ENCODE measurements at regions of chr10 and their contacts with region 1.

Region 1: DNA sequence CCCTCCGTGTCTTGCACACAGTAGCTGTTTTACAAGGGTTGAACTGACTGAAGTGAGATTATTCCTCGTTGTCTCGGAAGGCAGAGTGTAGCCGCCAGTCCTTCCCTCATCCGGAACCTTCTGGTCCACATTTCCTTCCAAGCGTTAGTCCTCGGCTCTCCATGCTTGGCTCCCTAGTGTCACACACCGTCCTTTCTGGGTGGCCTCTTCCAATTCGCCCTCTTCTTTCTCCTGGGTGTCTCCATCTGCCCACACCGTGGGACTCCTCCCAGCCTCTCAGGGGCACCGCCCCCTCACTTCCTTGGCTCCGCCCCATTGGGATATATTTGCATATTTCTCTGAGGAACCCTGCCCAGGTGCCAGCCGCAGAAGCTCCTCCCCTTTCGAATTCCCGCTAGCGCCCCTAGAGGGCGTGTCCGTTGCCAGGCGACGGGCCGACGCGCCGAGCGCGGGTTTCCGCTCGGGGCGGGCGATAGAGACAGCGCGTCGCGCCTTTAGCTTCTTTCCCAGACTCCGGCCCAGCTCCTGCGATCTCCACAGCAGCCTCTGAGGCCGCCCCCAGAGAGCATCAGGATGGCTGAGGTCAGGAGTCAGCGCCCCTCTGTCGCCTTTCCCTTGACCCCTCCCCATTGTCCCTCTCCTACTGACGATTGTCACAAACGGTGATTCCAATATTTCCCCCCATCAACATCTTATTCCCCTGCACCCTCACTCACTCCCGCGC is at the start of gene CFAP58:
- DNase-seq: peak; percentile 95 to 98 (median 97)
- H3K4me3 ChIP-seq: peak within 1 kb of the TSS; percentile 28
- H3K27ac ChIP-seq: peak within 1 kb of the TSS in 1 of 2 donors; percentile 4
- H3K4me1 ChIP-seq: no peaks in the 10 kb centered on the region
- H3K27me3 ChIP-seq: no peaks in the 10 kb centered on the region
- CTCF ChIP-seq: peak; percentile 49 to 93 (median 82)
- EP300 ChIP-seq: no peak
- POLR2A ChIP-seq: peak; percentile 6
- total RNA-seq, gene CFAP58: 0.17 to 7.9 (median 0.60) TPM

Region 2: DNA sequence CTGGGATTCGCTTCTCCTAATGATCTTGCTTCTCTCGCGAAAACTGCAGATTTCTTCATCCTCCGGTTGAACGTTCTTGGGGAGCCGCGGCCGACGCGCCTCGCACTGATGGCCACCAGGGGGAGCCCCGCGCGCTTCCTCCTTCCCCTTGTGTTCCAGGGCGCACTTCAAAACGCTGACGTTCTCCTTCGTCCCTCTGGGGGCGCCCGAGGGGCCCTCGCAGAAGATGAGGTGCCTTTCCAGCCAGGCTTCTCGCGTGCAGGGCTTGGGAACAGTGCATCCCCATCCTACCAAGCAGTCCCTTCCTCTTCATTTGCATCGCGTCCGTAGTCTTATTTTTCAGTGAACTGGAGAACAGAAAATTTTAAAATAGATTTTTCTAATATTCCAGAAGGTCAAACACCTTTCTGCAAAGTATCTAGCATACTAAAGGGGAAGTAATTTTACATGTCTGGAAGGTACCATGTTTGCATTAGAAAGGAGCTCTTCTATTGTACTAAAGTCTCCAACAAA is 62.0 kb before region 1 on chr10:
- intact Hi-C with region 1: loop called in 2 of 4 experiments (anchors 2 kb)
- DNase-seq: peak; percentile 86 to 95 (median 92)
- H3K4me3 ChIP-seq: no peak overlapping the region
- H3K27ac ChIP-seq: no peak overlapping the region
- H3K4me1 ChIP-seq: peaks cover 2% of the 10 kb centered on the region
- H3K27me3 ChIP-seq: no peaks in the 10 kb centered on the region
- CTCF ChIP-seq: peak; percentile 98 to 100 (median 99)
- EP300 ChIP-seq: no peak
- POLR2A ChIP-seq: peak; percentile 26

Region 3: DNA sequence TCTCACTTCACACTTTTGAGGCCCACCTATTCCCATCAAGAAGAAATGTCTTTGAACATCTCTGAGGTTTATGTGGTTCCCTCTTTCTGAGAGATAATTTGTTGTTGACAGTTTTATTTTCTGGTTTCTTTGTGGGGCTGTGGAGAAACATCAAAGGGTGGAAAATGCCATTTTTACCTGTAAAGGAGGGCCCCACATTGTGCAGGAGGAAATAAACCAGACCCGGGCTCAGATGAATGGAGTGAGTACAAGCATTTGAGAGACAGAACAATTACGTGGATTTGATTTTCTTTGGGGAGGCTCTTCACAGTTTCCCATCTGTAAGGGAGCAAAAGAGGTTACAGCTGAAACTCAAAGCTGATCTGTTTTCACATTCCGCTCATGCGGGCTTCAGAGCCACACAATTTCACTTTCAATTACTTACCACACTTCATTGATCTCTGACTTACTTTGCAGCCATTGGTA is 45.0 kb before region 1 on chr10:
- intact Hi-C with region 1: loop called in 1 of 4 experiments (anchors 5 kb)
- DNase-seq: peak in 1 of 5 donors; percentile 5
- H3K4me3 ChIP-seq: no peak overlapping the region
- H3K27ac ChIP-seq: no peak overlapping the region
- H3K4me1 ChIP-seq: peaks cover 22% of the 10 kb centered on the region
- H3K27me3 ChIP-seq: no peaks in the 10 kb centered on the region
- CTCF ChIP-seq: no peak
- EP300 ChIP-seq: no peak
- POLR2A ChIP-seq: no peak